ENCODE measurements at regions of chr16 and their contacts with region 1.

Region 1: DNA sequence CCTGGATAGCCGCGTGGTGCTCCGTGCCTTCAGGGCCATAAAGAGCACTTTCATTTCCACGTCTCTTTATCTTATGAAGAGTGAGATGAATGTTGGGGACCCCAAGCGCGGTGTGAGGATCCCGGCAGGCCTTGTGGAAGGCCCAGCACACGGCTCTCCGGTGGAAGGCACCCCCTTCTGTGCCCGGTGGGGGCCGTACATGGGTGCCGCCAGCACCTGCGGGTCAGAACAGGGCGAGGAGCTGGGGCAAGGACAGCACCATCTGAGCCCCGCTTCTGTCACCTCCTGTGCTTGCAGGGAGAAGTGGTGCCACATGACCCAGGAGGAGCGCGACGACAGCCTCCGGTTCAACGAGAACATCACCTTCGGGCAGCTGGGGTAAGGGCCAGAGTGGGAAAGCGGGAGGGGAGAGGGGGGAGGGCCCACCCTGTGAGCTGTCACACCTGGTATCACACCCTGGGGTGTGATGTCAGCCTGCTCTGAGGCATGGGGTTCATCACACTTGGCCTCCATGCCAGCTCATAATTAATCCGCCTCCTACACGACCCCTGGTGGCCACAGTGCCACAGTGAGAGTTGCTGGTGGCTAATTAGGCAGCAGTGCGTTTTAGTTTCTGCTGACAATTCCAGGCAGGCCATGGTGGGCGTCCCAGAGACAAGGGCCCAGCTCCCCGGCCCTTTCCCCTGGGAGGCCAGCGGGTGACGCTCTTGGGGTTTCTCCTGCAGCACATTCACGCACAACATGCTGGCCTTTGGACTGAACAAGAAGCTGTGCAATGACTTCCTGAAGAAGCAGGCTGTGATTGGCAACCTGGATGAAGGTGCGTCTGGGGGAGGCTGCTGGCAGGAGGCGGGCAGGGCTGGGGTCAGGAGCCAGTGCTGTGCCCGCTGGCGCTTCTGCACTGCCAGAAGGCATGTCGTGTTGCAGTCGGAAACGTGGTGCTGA is 25.7 kb downstream of the CIBAR2 start:
- DNase-seq: peak; percentile 61 to 86 (median 72)
- ATAC-seq: peak; percentile 81
- H3K4me3 ChIP-seq: no peak overlapping the region
- H3K4me3 Mint-ChIP-seq: no peak overlapping the region
- H3K27ac ChIP-seq: no peak overlapping the region
- H3K27ac Mint-ChIP-seq: no peak overlapping the region
- H3K4me1 ChIP-seq: peaks cover 34% of the 10 kb centered on the region
- H3K4me1 Mint-ChIP-seq: peaks cover 39% of the 10 kb centered on the region
- H3K27me3 ChIP-seq: no peaks in the 10 kb centered on the region
- H3K27me3 Mint-ChIP-seq: no peaks in the 10 kb centered on the region
- CTCF ChIP-seq: peak; percentile 55

Region 2: DNA sequence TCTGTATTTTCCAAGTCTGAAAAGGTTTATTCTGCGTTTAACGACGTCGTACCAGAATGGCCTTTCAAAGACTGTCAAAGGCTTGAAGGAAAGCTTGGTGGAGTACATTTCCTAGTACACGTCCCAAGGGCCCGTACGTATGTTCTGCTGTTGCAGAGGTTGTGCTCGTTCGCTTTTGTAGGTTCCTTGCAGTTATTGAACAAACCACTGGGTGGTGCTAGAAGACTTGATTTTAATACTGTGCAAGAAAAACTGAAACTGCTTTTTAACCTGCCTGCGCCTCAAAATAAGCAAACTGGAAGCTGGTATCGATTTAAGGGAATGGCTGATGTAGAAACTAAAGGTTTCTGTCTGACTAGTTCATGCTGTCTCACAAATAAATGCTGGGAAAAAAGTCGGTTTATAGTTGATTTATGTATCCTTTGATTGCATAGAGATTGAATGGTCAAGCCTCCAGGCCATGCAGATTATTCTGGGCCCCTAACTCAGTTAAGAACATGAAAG is 332.2 kb before region 1 on chr16:
- CTCF ChIA-PET with region 1: interaction called, 7 read pairs
- POLR2A ChIA-PET with region 1: no interaction called
- intact Hi-C with region 1: loop called in 1 of 2 experiments (anchors 10 kb)
- DNase-seq: peak in 13 of 14 experiments; percentile 22 to 92 (median 57)
- ATAC-seq: peak; percentile 58
- H3K4me3 ChIP-seq: peak overlapping the region; percentile 24
- H3K4me3 Mint-ChIP-seq: peak overlapping the region; percentile 72
- H3K27ac ChIP-seq: no peak overlapping the region
- H3K27ac Mint-ChIP-seq: peak overlapping the region; percentile 68
- H3K4me1 ChIP-seq: peaks cover 54% of the 10 kb centered on the region
- H3K4me1 Mint-ChIP-seq: peaks cover 89% of the 10 kb centered on the region
- H3K27me3 ChIP-seq: no peaks in the 10 kb centered on the region
- H3K27me3 Mint-ChIP-seq: no peaks in the 10 kb centered on the region
- CTCF ChIP-seq: peak; percentile 86

Region 3: DNA sequence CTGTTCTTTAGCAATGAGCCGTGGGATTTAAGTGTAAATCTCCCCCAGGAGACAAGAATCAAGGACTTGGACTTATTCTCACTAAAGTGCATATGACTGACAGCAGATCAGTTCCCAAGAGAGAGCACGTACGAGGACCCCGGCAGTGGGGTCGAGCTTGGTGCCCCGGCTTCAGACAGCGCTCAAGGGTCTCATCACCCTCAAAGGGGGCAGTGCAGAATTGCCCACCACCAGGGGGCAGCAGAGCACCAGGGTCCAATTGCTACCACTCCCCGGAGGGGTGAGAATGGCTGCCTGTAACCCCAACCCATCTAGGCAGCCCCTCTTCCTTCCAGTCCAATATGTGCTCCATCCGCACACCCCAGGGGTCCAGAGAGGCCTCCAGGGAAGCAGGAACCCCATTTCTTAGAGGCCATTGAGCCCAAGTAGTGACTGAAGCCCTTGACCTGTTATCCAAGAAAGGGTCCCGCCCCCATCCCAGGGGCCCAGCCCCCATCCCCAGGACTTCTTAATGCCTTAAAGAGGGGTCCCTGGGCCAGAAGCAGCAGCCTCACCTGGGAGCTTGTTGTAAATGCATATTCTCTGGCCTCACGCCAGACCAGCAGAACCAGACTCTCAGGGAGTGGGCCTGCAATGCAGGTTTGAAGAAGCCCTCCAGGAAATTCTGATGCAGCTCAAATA is 161.4 kb before region 1 on chr16:
- CTCF ChIA-PET with region 1: interaction called, 5 read pairs
- POLR2A ChIA-PET with region 1: no interaction called
- intact Hi-C with region 1: loop called (anchors 2 to 5 kb)
- DNase-seq: peak; percentile 54 to 82 (median 62)
- ATAC-seq: peak; percentile 60
- H3K4me3 ChIP-seq: no peak overlapping the region
- H3K4me3 Mint-ChIP-seq: no peak overlapping the region
- H3K27ac ChIP-seq: no peak overlapping the region
- H3K27ac Mint-ChIP-seq: no peak overlapping the region
- H3K4me1 ChIP-seq: peaks cover 3% of the 10 kb centered on the region
- H3K4me1 Mint-ChIP-seq: no peaks in the 10 kb centered on the region
- H3K27me3 ChIP-seq: no peaks in the 10 kb centered on the region
- H3K27me3 Mint-ChIP-seq: peaks cover 5% of the 10 kb centered on the region
- CTCF ChIP-seq: peak; percentile 92

Region 4: GRCh38 chr16:84985079-84986065 is 101.2 kb before region 1 on chr16:
- CTCF ChIA-PET with region 1: interaction called, 13 read pairs
- POLR2A ChIA-PET with region 1: no interaction called
- intact Hi-C with region 1: loop called in 1 of 2 experiments (anchors 5 kb)
- DNase-seq: no peak
- ATAC-seq: no peak
- H3K4me3 ChIP-seq: no peak overlapping the region
- H3K4me3 Mint-ChIP-seq: no peak overlapping the region
- H3K27ac ChIP-seq: no peak overlapping the region
- H3K27ac Mint-ChIP-seq: peak overlapping the region; percentile 28
- H3K4me1 ChIP-seq: peaks cover 12% of the 10 kb centered on the region
- H3K4me1 Mint-ChIP-seq: peaks cover 11% of the 10 kb centered on the region
- H3K27me3 ChIP-seq: no peaks in the 10 kb centered on the region
- H3K27me3 Mint-ChIP-seq: no peaks in the 10 kb centered on the region
- CTCF ChIP-seq: no peak

Region 5: DNA sequence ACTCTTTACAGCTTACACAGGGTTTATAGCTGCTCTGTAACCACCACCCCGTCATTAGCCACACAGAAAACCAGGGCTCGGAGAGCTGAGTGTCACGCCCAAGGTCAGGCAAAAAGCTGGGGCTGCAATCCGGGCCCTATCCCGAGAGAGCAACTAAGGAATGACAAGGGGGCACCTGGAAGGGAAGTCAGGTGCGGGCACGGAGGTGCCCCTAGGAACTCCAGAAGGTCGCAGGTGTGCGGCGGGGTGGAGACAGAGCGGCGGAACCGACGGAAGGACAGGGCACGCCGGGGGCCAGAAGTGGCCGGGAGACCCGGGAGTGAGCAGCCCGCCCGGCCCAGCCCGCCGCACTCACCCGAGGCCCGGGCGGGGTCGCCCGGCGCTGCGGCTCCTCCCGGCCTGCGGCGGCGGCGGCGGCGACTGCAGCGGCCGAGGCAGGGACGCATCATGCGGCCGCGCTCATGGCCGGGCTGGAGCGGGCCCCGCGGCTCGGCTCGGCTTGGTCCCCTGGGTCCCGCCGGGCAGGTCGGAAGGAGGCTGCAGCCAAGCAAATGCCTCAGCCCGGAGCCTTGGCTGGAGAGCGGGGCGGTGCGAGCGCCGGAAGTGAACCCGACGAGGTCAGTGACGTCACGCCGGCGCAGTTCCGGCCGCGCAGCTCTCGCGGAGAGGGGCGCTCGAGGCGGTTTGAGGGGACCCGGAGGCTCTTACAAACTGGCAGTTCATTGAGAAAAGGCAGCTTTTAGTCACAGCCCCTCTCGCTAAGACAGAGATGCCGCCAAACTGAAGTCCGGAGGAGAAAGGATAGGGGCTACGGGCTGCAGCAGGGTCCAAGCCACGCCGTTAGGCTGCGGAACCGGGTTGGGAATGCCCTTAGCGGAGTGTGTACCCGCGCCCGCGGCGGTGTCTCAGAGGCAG is 75.4 kb before region 1 on chr16 and contains the start of gene ZDHHC7:
- CTCF ChIA-PET with region 1: interaction called, 37 read pairs
- POLR2A ChIA-PET with region 1: interaction called, 14 read pairs
- intact Hi-C with region 1: loop called (anchors 1 to 5 kb)
- DNase-seq: peak; percentile 75 to 95 (median 80)
- ATAC-seq: peak; percentile 93
- H3K4me3 ChIP-seq: peak within 1 kb of the TSS; percentile 98
- H3K4me3 Mint-ChIP-seq: peak within 1 kb of the TSS; percentile 99
- H3K27ac ChIP-seq: peak within 1 kb of the TSS; percentile 94 to 98
- H3K27ac Mint-ChIP-seq: peak within 1 kb of the TSS; percentile 96
- H3K4me1 ChIP-seq: peaks cover 31% of the 10 kb centered on the region
- H3K4me1 Mint-ChIP-seq: peaks cover 54% of the 10 kb centered on the region
- H3K27me3 ChIP-seq: no peaks in the 10 kb centered on the region
- H3K27me3 Mint-ChIP-seq: no peaks in the 10 kb centered on the region
- CTCF ChIP-seq: peak; percentile 25
- total RNA-seq, gene ZDHHC7: 39.8 to 44.6 TPM

Region 6: GRCh38 chr16:85055503-85056210 is 31.0 kb before region 1 on chr16:
- CTCF ChIA-PET with region 1: interaction called, 12 read pairs
- POLR2A ChIA-PET with region 1: interaction called, 10 read pairs
- intact Hi-C with region 1: loop called (anchors 1 to 2 kb)
- DNase-seq: peak; percentile 33 to 94 (median 62)
- ATAC-seq: peak; percentile 92
- H3K4me3 ChIP-seq: peak overlapping the region; percentile 38
- H3K4me3 Mint-ChIP-seq: peak overlapping the region; percentile 79
- H3K27ac ChIP-seq: peak overlapping the region; percentile 68 to 78
- H3K27ac Mint-ChIP-seq: peak overlapping the region; percentile 92
- H3K4me1 ChIP-seq: peaks cover 40% of the 10 kb centered on the region
- H3K4me1 Mint-ChIP-seq: peaks cover 52% of the 10 kb centered on the region
- H3K27me3 ChIP-seq: no peaks in the 10 kb centered on the region
- H3K27me3 Mint-ChIP-seq: no peaks in the 10 kb centered on the region
- CTCF ChIP-seq: no peak

Region 7: GRCh38 chr16:85104821-85105391 is 18.3 kb after region 1 on chr16:
- CTCF ChIA-PET with region 1: interaction called, 3 read pairs
- POLR2A ChIA-PET with region 1: interaction called, 14 read pairs
- intact Hi-C with region 1: no loop called
- DNase-seq: peak in 6 of 14 experiments; percentile 17 to 85 (median 44)
- ATAC-seq: peak; percentile 86
- H3K4me3 ChIP-seq: no peak overlapping the region
- H3K4me3 Mint-ChIP-seq: peak overlapping the region; percentile 52
- H3K27ac ChIP-seq: peak overlapping the region; percentile 7 to 47
- H3K27ac Mint-ChIP-seq: peak overlapping the region; percentile 94
- H3K4me1 ChIP-seq: peaks cover 44% of the 10 kb centered on the region
- H3K4me1 Mint-ChIP-seq: peaks cover 39% of the 10 kb centered on the region
- H3K27me3 ChIP-seq: no peaks in the 10 kb centered on the region
- H3K27me3 Mint-ChIP-seq: no peaks in the 10 kb centered on the region
- CTCF ChIP-seq: no peak

Region 8: DNA sequence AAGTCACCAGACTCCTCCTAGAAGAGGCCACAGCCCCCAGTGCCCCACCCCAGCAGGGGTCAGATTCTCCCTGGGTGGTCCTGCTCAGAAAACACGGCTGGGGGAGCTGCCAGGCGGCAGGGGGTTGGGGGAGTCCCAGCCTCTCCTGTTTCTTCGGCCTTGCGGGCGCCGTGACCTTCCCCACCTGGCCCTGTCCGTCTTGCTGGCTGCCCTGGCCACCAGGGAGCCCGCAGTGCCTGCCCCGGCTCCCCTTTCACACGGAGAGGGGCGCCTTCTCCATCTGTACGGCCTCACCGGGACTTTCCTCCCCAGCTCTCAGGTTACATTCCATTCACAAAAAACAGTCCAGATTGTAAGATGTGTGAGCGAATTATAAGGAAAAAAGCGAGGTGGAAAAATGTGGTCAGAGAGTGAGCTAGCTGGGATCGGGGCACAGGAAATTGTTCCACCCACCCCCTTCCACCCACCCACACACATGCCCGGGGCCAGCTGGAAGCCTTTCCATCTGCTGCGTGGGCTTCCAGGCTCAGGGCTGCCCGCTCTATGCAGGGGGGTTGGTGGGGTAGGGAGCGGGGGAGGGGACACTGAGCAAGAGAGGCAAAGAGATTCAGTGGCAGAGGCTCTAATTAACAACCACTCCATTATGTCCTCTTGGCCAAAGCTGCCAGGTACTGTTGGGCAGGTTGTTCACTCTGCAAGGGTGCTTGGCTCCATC is 40.2 kb after region 1 on chr16:
- CTCF ChIA-PET with region 1: no interaction called
- POLR2A ChIA-PET with region 1: no interaction called
- intact Hi-C with region 1: no loop called
- DNase-seq: no peak
- ATAC-seq: no peak
- H3K4me3 ChIP-seq: no peak overlapping the region
- H3K4me3 Mint-ChIP-seq: no peak overlapping the region
- H3K27ac ChIP-seq: no peak overlapping the region
- H3K27ac Mint-ChIP-seq: no peak overlapping the region
- H3K4me1 ChIP-seq: peaks cover 2% of the 10 kb centered on the region
- H3K4me1 Mint-ChIP-seq: peaks cover 5% of the 10 kb centered on the region
- H3K27me3 ChIP-seq: no peaks in the 10 kb centered on the region
- H3K27me3 Mint-ChIP-seq: no peaks in the 10 kb centered on the region
- CTCF ChIP-seq: no peak

Region 9: GRCh38 chr16:86975445-86975844 is 1888.8 kb after region 1 on chr16:
- CTCF ChIA-PET with region 1: no interaction called
- POLR2A ChIA-PET with region 1: no interaction called
- intact Hi-C with region 1: no loop called
- DNase-seq: no peak
- ATAC-seq: no peak
- H3K4me3 ChIP-seq: no peak overlapping the region
- H3K4me3 Mint-ChIP-seq: no peak overlapping the region
- H3K27ac ChIP-seq: no peak overlapping the region
- H3K27ac Mint-ChIP-seq: no peak overlapping the region
- H3K4me1 ChIP-seq: no peaks in the 10 kb centered on the region
- H3K4me1 Mint-ChIP-seq: no peaks in the 10 kb centered on the region
- H3K27me3 ChIP-seq: peaks cover 0 to 4% of the 10 kb centered on the region in 2 experiments
- H3K27me3 Mint-ChIP-seq: no peaks in the 10 kb centered on the region
- CTCF ChIP-seq: no peak